BJ (cell line): ENCODE measurements at regions of chr16 and their contacts with region 1.

Region 1: DNA sequence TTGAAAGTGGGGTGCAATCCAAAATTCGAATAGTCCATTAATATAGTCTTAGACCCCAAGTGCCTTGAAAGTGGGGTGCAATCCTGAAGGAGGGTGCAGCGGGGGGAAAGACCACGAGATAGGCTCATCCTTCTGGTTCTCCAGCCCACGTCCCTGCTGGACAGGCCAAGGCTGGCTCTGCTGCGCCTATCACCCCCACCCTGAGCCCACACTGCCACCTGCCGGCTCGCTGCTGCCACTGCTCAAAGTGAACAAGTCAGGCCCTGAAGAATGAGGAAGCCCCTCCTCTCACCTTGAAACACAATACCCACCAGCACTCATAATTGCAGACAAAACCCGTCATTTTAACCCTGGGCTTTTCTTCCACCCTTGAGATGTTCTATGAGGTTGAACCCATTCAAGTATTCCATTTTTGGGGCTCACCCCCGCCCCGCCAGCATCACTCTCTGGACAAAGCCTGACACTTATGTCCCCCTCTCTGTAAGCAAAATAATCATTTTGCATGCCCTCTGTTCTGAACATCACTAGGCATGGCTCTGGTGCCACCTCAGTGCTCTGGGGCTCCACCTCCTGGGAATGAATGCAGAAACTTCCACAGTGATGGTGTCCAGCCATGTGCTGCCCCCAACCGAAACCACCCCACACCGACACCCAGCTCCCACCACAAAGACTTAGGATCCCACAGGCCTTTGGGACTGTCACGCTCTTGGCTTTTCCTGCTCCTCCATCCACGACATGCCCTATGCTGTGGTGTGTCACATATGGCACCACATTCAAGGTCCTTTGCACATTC is 56.8 kb downstream of the BEAN1 start:
- DNase-seq: no peak
- H3K4me3 ChIP-seq: no peak overlapping the region
- H3K27me3 ChIP-seq: no peaks in the 10 kb centered on the region; the same call in none of the 2 replicates
- CTCF ChIP-seq: peak; percentile 99

Region 2: GRCh38 chr16:66469291-66469946 is 14.5 kb before region 1 on chr16:
- CTCF ChIA-PET with region 1: interaction called, 13 read pairs
- POLR2A ChIA-PET with region 1: no interaction called
- DNase-seq: no peak
- H3K4me3 ChIP-seq: no peak overlapping the region
- H3K27me3 ChIP-seq: peaks cover 10% of the 10 kb centered on the region
- CTCF ChIP-seq: no peak

Region 3: DNA sequence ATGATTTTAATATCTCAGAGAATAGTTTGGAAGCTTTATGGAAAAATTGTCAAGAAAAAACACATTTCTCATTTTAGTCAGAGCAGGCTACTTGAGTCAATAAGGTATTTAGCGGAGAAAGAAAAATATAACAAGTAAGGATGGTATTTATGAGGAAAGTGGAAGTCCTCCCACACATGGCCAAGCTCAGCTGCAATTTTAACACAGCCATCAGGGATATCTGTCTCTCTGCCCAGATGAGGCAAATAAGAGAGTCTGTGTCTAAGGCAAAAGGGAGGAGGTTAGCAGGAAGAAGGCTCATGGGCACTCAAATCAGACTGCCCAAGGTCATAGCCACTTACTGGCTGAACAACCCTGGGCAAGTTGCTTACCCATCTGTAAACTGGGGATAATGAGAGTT is 90.2 kb after region 1 on chr16:
- CTCF ChIA-PET with region 1: no interaction called
- POLR2A ChIA-PET with region 1: no interaction called
- DNase-seq: no peak
- H3K4me3 ChIP-seq: no peak overlapping the region
- H3K27me3 ChIP-seq: peaks cover 13% of the 10 kb centered on the region
- CTCF ChIP-seq: no peak